Mucosa of descending colon (tissue), 3 donors: ENCODE measurements at regions of chr1 and their contacts with region 1.

Region 1: DNA sequence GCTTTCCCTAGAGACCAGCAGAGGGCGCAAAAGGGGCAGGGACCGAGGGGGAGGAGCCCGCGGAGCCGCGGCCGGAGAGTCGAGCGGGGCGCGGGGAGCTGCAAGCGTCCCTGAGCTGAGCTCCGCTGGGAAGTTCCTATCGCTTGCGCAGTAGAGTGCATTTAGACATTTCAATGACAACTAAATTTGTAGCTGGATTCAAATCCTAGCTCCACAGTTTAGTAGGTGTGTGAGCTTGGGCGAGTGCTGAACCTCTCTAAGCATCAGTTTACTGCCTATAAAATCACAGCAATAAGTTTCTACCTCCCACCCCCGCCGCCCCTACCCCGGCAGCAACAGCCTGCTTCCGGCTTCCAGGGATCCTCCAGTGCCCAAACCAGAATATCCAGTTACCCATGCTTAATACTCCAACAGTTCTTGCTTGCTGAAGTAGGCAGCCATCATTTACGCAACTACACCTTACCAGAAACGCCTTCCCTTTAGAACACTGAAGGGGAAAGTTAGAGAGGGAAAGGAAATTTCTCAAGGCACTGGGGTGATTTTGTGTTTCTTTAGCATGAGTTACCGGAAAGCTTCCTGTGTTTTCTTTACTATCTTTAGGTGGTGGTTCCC is 9.1 kb downstream of the TLR5 start:
- DNase-seq: peak; percentile 83 to 86 (median 86)
- ATAC-seq: peak; percentile 95
- H3K4me3 ChIP-seq: no peak overlapping the region
- H3K4me1 ChIP-seq: peaks cover 15% of the 10 kb centered on the region
- CTCF ChIP-seq: peak; percentile 90

Region 2: GRCh38 chr1:222792744-222793143 is 341.2 kb before region 1 on chr1:
- intact Hi-C with region 1: loop called in 1 of 2 experiments (anchors 10 kb)
- DNase-seq: no peak
- ATAC-seq: no peak
- H3K4me3 ChIP-seq: no peak overlapping the region
- H3K4me1 ChIP-seq: no peaks in the 10 kb centered on the region
- CTCF ChIP-seq: no peak

Region 3: GRCh38 chr1:223683586-223684487 is 549.9 kb after region 1 on chr1:
- intact Hi-C with region 1: loop called (anchors 10 kb)
- DNase-seq: peak in 2 of 3 donors; percentile 59 to 85
- ATAC-seq: peak; percentile 81
- H3K4me3 ChIP-seq: no peak overlapping the region
- H3K4me1 ChIP-seq: no peaks in the 10 kb centered on the region
- CTCF ChIP-seq: peak; percentile 20